Spleen (tissue), 13 donors: ENCODE measurements at regions of chr22 and their contacts with region 1.

Region 1: DNA sequence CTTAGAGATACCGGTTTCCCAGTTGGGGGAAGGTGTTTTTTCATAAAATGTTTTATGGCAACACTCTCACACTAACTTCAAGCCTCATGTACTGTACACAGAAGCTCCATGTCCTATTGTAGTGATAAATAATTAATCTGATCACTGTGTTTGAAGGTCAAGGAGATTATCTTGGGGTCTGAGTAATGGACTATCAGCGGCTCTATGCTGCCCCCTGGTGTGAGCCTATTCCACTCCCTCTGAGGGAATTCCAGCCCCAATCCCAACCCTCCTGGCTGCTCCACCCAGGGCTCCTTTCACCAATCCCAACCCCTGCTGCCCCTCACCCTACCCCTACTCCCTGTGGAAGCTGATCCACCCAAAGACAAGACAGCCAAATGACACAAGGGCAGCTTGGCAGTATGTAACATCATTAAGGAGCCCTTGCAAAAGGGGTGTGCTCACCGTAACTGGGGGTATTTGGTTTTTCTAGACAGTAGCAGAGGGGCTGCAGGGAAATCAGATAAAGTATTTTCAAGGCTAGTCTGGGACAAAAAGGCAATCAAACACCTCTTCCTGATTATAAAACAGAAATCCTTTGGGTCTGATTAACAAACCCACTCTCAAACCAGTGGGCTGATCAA is 22.3 kb downstream of the HPS4 start:
- DNase-seq: no peak
- H3K4me3 ChIP-seq: no peak overlapping the region
- H3K27ac ChIP-seq: no peak overlapping the region
- H3K4me1 ChIP-seq: peaks cover 0 to 17% (median 3%) of the 10 kb centered on the region in 6 donors
- H3K27me3 ChIP-seq: no peaks in the 10 kb centered on the region
- CTCF ChIP-seq: peak; percentile 18 to 79 (median 66)
- POLR2A ChIP-seq: no peak

Region 2: DNA sequence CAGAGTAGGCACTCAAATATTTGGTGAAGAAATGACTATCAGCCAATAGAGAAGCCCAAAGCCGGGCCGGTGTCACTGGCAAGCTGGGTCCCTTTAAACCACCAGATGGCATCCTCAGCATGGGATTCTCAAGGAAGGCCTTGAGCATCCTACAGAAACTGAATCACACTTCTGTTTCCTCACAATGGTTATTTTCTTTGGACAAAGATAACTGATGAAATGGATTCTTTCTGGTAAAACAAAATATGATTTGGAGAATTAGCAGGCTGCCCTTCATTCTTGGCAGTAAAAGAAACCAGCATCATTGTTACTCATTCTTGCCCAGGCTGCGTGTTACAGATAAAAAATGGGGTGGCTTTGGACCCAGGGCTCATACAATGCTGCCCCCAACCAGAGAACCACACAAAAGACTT is 62.6 kb before region 1 on chr22:
- intact Hi-C with region 1: loop called (anchors 10 kb)
- DNase-seq: no peak
- H3K4me3 ChIP-seq: no peak overlapping the region
- H3K27ac ChIP-seq: no peak overlapping the region
- H3K4me1 ChIP-seq: peaks cover 0 to 4% (median 0%) of the 10 kb centered on the region in 6 donors
- H3K27me3 ChIP-seq: peaks cover 0 to 9% (median 0%) of the 10 kb centered on the region in 7 donors
- CTCF ChIP-seq: peak; percentile 24 to 85 (median 55)
- POLR2A ChIP-seq: no peak

Region 3: GRCh38 chr22:26502688-26503561 is 41.6 kb after region 1 on chr22:
- intact Hi-C with region 1: no loop called
- DNase-seq: peak; percentile 84
- H3K4me3 ChIP-seq: no peak overlapping the region
- H3K27ac ChIP-seq: peak overlapping the region in 5 of 8 donors; percentile 39 to 75 (median 52)
- H3K4me1 ChIP-seq: peaks cover 6 to 31% (median 16%) of the 10 kb centered on the region in 6 donors
- H3K27me3 ChIP-seq: no peaks in the 10 kb centered on the region
- CTCF ChIP-seq: peak; percentile 35 to 74 (median 57)
- POLR2A ChIP-seq: no peak